ENCODE measurements at regions of chr2 and their contacts with region 1.

Region 1: GRCh38 chr2:70861777-70862625 is 26.4 kb upstream of the CD207 start:
- DNase-seq: peak; percentile 76
- ATAC-seq: peak; percentile 89
- H3K4me3 ChIP-seq: no peak overlapping the region
- H3K27ac ChIP-seq: no peak overlapping the region
- H3K4me1 ChIP-seq: peaks cover 25% of the 10 kb centered on the region
- H3K27me3 ChIP-seq: peaks cover 0 to 18% of the 10 kb centered on the region in 2 experiments; a peak in 3 of 5 replicates
- CTCF ChIP-seq: peak; percentile 97
- EP300 ChIP-seq: no peak
- POLR2A ChIP-seq: no peak
- RAD21 ChIP-seq: peak; percentile 87

Region 2: GRCh38 chr2:70656421-70657010 is 205.5 kb before region 1 on chr2:
- CTCF ChIA-PET with region 1: no interaction called
- POLR2A ChIA-PET with region 1: no interaction called
- in situ Hi-C with region 1: loop called (anchors 10 kb)
- intact Hi-C with region 1: loop called (anchors 10 kb)
- DNase-seq: no peak
- ATAC-seq: no peak
- H3K4me3 ChIP-seq: no peak overlapping the region
- H3K27ac ChIP-seq: no peak overlapping the region
- H3K4me1 ChIP-seq: no peaks in the 10 kb centered on the region
- H3K27me3 ChIP-seq: peaks cover 3 to 40% of the 10 kb centered on the region in 2 experiments; a peak in 3 of 5 replicates
- CTCF ChIP-seq: no peak
- EP300 ChIP-seq: no peak
- POLR2A ChIP-seq: no peak
- RAD21 ChIP-seq: no peak

Region 3: GRCh38 chr2:70806013-70806412 is 56.0 kb before region 1 on chr2:
- CTCF ChIA-PET with region 1: interaction called, 3 read pairs
- POLR2A ChIA-PET with region 1: no interaction called
- in situ Hi-C with region 1: no loop called
- intact Hi-C with region 1: loop called (anchors 5 kb)
- DNase-seq: no peak
- ATAC-seq: no peak
- H3K4me3 ChIP-seq: no peak overlapping the region
- H3K27ac ChIP-seq: no peak overlapping the region
- H3K4me1 ChIP-seq: peaks cover 64% of the 10 kb centered on the region
- H3K27me3 ChIP-seq: no peaks in the 10 kb centered on the region
- CTCF ChIP-seq: no peak
- EP300 ChIP-seq: no peak
- POLR2A ChIP-seq: no peak
- RAD21 ChIP-seq: no peak

Region 4: GRCh38 chr2:70919672-70920366 is 57.8 kb after region 1 on chr2:
- CTCF ChIA-PET with region 1: interaction called, 13 read pairs
- POLR2A ChIA-PET with region 1: no interaction called
- in situ Hi-C with region 1: no loop called
- intact Hi-C with region 1: no loop called
- DNase-seq: peak; percentile 80
- ATAC-seq: peak; percentile 88
- H3K4me3 ChIP-seq: no peak overlapping the region
- H3K27ac ChIP-seq: no peak overlapping the region
- H3K4me1 ChIP-seq: peaks cover 22% of the 10 kb centered on the region
- H3K27me3 ChIP-seq: no peaks in the 10 kb centered on the region
- CTCF ChIP-seq: peak; percentile 97
- EP300 ChIP-seq: no peak
- POLR2A ChIP-seq: no peak
- RAD21 ChIP-seq: peak; percentile 95

Region 5: DNA sequence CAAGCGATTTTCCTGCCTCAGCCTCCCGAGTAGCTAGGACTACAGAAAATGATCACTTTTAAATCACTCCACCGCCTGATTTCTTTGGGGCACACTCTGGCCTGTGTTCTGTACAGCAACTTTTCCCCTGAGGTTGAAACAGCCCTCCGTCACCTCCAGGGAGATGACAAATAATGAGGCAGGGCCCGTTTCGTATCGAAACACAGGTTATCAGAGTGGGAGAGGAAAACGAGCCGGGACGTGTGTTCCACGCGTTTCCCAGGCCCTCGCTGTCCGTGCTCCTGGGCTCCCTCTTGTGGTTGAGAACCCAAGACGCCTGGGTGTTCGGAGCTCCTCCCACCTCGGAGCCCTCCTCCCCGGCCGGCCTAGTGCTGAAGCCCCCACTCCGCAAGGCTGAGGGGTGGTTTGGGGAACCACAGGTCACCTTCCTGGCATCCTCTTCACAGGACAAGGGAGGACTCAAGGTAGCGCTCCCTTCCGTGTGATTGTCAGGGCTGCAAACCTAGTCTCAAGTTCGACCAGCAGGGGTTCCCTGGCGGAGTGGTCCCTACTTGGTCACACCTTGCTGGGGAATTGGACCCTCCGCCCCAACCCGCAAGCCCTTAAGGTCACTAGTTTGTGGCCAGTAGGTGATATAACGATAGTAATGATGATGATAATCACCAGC is 86.5 kb after region 1 on chr2:
- CTCF ChIA-PET with region 1: interaction called, 93 read pairs
- POLR2A ChIA-PET with region 1: no interaction called
- in situ Hi-C with region 1: no loop called
- intact Hi-C with region 1: no loop called
- DNase-seq: peak; percentile 67
- ATAC-seq: peak; percentile 93
- H3K4me3 ChIP-seq: peak overlapping the region; percentile 10 to 61 (median 53)
- H3K27ac ChIP-seq: no peak overlapping the region
- H3K4me1 ChIP-seq: peaks cover 34% of the 10 kb centered on the region
- H3K27me3 ChIP-seq: peaks cover 0 to 17% of the 10 kb centered on the region in 2 experiments; a peak in 3 of 5 replicates
- CTCF ChIP-seq: peak; percentile 98
- EP300 ChIP-seq: no peak
- POLR2A ChIP-seq: no peak
- RAD21 ChIP-seq: peak; percentile 79

Measured in HepG2 (cell line).